Left colon (tissue), 2 donors: ENCODE measurements at regions of chr22 and their contacts with region 1.

Region 1: GRCh38 chr22:24768537-24769374 is 5.8 kb downstream of the PIWIL3 start:
- DNase-seq: peak; percentile 51 to 80
- ATAC-seq: peak; percentile 93

Region 2: DNA sequence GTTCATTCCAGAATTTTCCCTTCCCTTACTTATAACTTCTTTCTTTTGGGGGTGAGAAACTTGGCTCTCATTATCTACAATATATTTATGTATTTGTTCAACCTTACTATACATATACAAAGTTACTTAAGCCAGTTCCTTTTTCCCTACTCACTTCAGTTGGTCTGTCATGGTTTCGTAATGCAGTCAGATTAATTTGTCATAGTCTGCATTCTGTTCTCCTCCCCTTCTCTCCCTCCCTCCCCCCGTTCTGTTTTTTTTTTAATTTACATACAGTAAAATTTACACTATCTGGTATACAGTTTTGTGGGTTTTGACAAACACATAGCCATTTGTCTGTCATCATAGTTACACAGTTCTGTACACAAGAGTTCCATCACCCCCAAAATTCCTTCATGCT is 413.2 kb before region 1 on chr22:
- intact Hi-C with region 1: no loop called
- DNase-seq: no peak
- ATAC-seq: no peak

Region 3: DNA sequence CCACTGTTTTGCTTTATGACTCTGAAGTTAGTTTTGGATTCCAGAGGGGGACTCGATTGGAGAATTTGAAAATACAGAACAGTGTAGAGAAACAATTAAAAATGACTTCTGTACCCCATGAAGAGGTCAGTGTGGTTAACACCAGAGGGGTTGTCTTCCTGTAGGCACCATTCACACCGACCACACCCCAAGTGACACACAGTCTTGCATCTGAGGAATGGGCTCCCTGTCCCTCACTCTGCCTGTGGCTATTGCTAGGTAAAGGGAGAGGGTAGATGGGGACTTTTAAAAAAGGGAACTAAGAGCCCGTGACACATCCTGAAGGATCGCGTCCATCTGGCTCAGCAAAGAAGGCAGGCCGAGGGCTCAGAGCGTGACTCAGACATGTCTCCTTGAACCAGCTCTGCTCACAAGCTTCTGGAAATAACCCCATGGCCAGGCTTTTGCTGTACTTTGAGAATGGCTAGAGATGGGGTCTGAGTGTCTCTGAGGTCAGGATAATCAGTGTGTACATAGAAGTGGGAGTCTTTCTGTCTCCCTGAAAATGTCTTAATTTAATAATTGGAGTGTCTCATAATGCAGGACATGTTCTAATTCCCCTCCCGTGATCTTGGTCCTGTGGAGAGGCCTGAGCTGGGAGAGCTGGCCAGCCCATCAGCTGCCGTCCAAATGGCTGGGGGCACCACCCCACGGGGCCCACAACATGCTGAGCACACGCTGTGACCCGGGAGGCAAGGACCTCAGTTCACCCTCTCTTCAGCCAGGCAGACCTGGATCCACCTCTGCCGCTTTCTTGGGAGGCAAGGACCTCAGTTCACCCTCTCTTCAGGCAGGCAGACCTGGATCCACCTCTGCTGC is 76.5 kb after region 1 on chr22:
- intact Hi-C with region 1: loop called in 1 of 2 experiments (anchors 5 kb)
- DNase-seq: no peak
- ATAC-seq: no peak

Region 4: GRCh38 chr22:24920029-24920428 is 151.3 kb after region 1 on chr22:
- intact Hi-C with region 1: no loop called
- DNase-seq: no peak
- ATAC-seq: no peak